Dendritic cell treated with granulocyte-macrophage colony-stimulating factor and Interleukin-4, amounts not matched to agents 40 ng/mL and 50 ng/mL, for 4 days (primary cell): ENCODE measurements at regions of chr6 and their contacts with region 1.

Region 1: GRCh38 chr6:30616811-30617564 is at the start of gene PPP1R10:
- H3K4me3 Mint-ChIP-seq: peak within 1 kb of the TSS; percentile 88
- H3K27ac Mint-ChIP-seq: peak within 1 kb of the TSS; percentile 95
- H3K4me1 Mint-ChIP-seq: peaks cover 35% of the 10 kb centered on the region
- H3K27me3 Mint-ChIP-seq: no peaks in the 10 kb centered on the region

Region 2: DNA sequence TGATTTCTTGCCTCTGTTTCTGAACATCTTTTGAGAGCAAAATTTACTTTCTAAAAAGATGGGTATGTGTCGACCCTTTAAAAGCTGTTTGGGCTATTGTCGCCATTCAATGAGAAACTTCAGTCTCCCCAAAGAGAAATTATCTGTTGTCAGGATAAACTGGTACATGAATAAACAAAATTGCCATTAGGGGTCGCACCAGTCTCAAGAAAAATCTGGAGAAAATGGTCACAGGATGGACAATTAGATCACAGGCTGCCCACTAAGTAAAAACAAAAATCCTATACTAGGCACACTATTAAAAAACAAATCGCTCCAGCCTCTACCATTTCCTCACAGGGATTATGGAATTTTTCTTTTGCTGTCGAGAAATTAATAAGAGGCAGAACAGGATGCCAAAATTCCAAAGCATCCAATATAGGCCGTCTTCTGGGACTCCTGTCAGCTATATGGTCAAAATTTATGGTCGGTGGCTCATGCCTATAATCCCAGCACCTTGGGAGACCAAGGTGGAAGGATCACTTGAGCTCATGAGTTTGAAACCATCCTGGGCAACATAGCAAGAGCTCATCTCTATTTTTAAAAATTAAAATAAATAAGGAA is 133.2 kb before region 1 on chr6:
- intact Hi-C with region 1: loop called (anchors 5 kb)
- H3K4me3 Mint-ChIP-seq: no peak overlapping the region
- H3K27ac Mint-ChIP-seq: no peak overlapping the region
- H3K4me1 Mint-ChIP-seq: peaks cover 29% of the 10 kb centered on the region
- H3K27me3 Mint-ChIP-seq: peaks cover 49% of the 10 kb centered on the region

Region 3: GRCh38 chr6:30556066-30556905 is 60.7 kb before region 1 on chr6 and contains the start of gene GNL1:
- intact Hi-C with region 1: loop called (anchors 1 kb)
- H3K4me3 Mint-ChIP-seq: peak within 1 kb of the TSS; percentile 99
- H3K27ac Mint-ChIP-seq: peak within 1 kb of the TSS; percentile 100
- H3K4me1 Mint-ChIP-seq: peaks cover 34% of the 10 kb centered on the region
- H3K27me3 Mint-ChIP-seq: no peaks in the 10 kb centered on the region

Region 4: GRCh38 chr6:30571075-30571768 is 45.8 kb before region 1 on chr6 and contains the start of gene ABCF1:
- intact Hi-C with region 1: loop called (anchors 1 kb)
- H3K4me3 Mint-ChIP-seq: peak within 1 kb of the TSS; percentile 92
- H3K27ac Mint-ChIP-seq: peak within 1 kb of the TSS; percentile 89
- H3K4me1 Mint-ChIP-seq: peaks cover 51% of the 10 kb centered on the region
- H3K27me3 Mint-ChIP-seq: no peaks in the 10 kb centered on the region

Region 5: GRCh38 chr6:30678964-30679726 is 62.2 kb after region 1 on chr6:
- intact Hi-C with region 1: loop called (anchors 2 kb)
- H3K4me3 Mint-ChIP-seq: peak overlapping the region; percentile 93
- H3K27ac Mint-ChIP-seq: peak overlapping the region; percentile 91
- H3K4me1 Mint-ChIP-seq: peaks cover 56% of the 10 kb centered on the region
- H3K27me3 Mint-ChIP-seq: no peaks in the 10 kb centered on the region

Region 6: GRCh38 chr6:30717042-30717844 is 100.3 kb after region 1 on chr6 and contains the start of gene MDC1:
- intact Hi-C with region 1: loop called (anchors 1 kb)
- H3K4me3 Mint-ChIP-seq: peak within 1 kb of the TSS; percentile 90
- H3K27ac Mint-ChIP-seq: peak within 1 kb of the TSS; percentile 98
- H3K4me1 Mint-ChIP-seq: peaks cover 50% of the 10 kb centered on the region
- H3K27me3 Mint-ChIP-seq: no peaks in the 10 kb centered on the region

Region 7: DNA sequence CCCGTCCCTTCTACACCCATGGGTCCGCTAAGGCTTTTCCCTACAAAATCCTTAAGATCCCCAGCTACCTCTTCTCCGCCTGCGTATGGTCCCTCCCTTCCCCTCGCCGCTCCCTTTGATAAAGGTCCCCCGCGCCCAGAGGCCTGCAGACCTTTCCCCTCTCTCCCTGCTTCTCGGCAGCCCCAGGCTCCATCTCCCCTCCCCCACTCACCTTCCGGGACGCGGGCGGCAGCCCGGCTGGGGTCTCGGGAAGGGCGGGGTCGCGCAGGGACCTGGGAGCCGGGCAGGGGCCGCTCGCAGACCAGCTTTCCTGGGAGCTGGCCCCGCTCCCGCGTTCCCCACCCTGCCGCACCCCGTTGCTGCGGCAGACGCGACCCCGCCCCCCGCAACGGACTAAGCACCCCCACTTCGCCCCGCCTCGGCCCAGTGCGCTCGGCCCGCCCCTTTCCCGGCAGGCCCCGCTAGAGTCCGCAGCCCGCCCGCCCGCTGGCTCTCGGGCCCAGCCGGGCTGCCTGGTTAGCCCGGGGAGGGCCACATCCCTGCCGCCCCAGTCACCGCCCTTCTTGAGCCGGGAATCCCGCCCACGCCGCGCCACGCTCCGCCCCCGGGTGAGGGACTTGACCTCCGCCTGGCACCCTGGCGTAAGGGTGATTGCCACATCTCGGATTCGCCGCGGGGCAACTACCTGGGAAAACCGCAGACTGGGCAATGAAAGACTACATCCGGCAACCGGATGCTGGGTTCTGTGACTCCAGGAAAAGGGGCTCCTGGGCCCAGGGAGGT is 125.5 kb after region 1 on chr6 and contains the start of gene FLOT1:
- intact Hi-C with region 1: loop called (anchors 5 kb)
- H3K4me3 Mint-ChIP-seq: peak within 1 kb of the TSS; percentile 98
- H3K27ac Mint-ChIP-seq: peak within 1 kb of the TSS; percentile 99
- H3K4me1 Mint-ChIP-seq: peaks cover 67% of the 10 kb centered on the region
- H3K27me3 Mint-ChIP-seq: peaks cover 4% of the 10 kb centered on the region